ENCODE measurements at regions of chr16 and their contacts with region 1.

Region 1: GRCh38 chr16:57475711-57476339 is 10.5 kb downstream of the DOK4 start:
- DNase-seq: peak; percentile 43 to 79 (median 65)
- ATAC-seq: peak; percentile 90 to 93 (median 92)
- H3K4me3 ChIP-seq: peak overlapping the region in 1 of 2 donors; percentile 2
- H3K4me3 Mint-ChIP-seq: peak overlapping the region in 1 of 3 donors; percentile 34
- H3K27ac ChIP-seq: peak overlapping the region; percentile 34
- H3K27ac Mint-ChIP-seq: peak overlapping the region in 1 of 2 donors; percentile 72
- H3K4me1 ChIP-seq: peaks cover 6 to 26% of the 10 kb centered on the region in 2 experiments
- H3K4me1 Mint-ChIP-seq: peaks cover 13 to 19% (median 17%) of the 10 kb centered on the region in 3 donors
- H3K27me3 ChIP-seq: no peaks in the 10 kb centered on the region
- H3K27me3 Mint-ChIP-seq: no peaks in the 10 kb centered on the region

Region 2: DNA sequence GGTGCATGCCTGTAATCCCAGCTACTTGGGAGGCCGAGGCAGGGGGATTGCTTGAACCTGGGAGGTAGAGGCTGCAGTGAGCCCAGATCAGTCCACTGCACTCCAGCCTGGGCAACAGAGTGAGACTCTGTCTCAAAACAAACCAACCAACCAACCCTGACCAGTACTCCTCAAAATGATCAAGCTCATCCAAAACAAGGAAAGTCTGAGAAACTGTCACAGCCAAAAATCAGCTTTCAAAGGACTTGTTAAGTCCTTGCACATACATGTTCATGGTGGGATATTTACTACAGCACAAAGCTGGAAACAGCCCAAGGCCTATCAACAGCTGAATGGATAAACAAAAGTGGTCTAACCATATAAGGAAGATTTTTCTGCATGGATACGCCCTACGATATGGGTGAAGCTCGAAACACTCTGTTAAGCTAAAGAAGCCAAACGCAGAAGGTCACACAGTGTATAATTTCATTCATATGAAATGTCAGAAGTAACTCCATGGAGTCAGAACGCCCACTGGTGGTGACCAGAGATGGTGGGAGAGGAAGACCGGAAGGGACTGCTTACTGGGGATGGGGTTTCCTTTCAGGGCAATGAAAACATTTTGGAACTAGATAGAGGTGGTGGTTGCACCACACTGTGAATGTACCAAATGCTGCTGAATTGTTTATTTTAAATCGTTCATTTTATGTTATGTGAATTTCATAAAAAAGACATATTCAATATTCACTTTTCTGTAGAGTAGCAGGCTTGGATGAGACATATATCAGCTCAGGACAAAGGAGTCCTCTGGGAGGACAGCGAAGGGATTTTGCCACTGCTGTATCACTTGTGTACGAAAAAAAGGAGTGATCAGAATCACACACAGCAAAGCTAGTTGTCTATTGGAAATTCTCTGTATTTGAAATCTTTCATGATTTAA is 53.5 kb before region 1 on chr16:
- CTCF ChIA-PET with region 1: interaction called in 1 of 2 experiments, 3 read pairs
- POLR2A ChIA-PET with region 1: interaction called in 1 of 2 experiments, 11 read pairs
- DNase-seq: no peak
- ATAC-seq: no peak
- H3K4me3 ChIP-seq: no peak overlapping the region
- H3K4me3 Mint-ChIP-seq: no peak overlapping the region
- H3K27ac ChIP-seq: no peak overlapping the region
- H3K27ac Mint-ChIP-seq: no peak overlapping the region
- H3K4me1 ChIP-seq: peaks cover 0 to 16% of the 10 kb centered on the region in 2 experiments
- H3K4me1 Mint-ChIP-seq: peaks cover 15 to 17% (median 16%) of the 10 kb centered on the region in 3 donors
- H3K27me3 ChIP-seq: peaks cover 0 to 2% of the 10 kb centered on the region in 2 experiments
- H3K27me3 Mint-ChIP-seq: no peaks in the 10 kb centered on the region

Region 3: DNA sequence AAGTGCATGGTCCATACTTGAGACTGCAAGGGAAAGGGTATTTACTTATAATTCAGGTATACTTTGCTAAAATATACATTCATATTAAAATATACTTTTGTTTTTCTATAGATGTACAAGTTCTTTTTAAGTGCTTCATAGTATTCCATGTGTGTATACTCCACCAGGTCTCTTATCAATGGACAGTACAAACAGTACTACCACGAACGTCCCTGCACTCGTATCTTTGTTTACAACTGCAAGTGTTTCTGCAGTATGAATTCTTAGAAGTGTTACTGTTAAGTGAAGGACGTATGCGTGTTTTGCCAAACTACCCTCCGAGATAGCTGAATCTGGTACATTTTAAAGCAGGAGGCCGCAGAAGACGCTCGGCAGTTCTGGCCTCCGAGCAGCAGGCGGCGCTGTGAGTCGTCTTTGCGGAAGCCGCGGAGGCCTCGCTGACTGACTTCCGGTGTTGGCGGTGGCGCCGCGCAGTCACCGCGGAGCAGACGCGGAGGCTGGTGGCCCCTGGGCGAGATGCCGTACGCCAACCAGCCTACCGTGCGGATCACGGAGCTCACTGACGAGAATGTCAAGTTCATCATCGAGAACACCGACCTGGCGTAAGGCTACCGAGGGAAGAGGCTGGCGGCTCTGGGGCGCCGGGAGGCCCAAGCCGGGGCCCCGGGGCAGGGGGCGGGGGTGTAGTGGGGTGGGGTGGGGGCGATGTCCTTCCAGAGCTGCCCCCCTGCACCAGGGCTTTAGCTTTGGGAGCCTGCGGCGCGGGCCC is 13.4 kb before region 1 on chr16 and contains the start of gene POLR2C:
- CTCF ChIA-PET with region 1: interaction called in 1 of 2 experiments, 13 read pairs
- POLR2A ChIA-PET with region 1: no interaction called
- DNase-seq: peak; percentile 82 to 96 (median 89)
- ATAC-seq: peak; percentile 95 to 98 (median 96)
- H3K4me3 ChIP-seq: peak within 1 kb of the TSS; percentile 72 to 93
- H3K4me3 Mint-ChIP-seq: peak within 1 kb of the TSS; percentile 90 to 100 (median 100)
- H3K27ac ChIP-seq: peak within 1 kb of the TSS; percentile 22
- H3K27ac Mint-ChIP-seq: peak within 1 kb of the TSS; percentile 100
- H3K4me1 ChIP-seq: peaks cover 6 to 19% of the 10 kb centered on the region in 2 experiments
- H3K4me1 Mint-ChIP-seq: peaks cover 35 to 42% (median 38%) of the 10 kb centered on the region in 3 donors
- H3K27me3 ChIP-seq: no peaks in the 10 kb centered on the region
- H3K27me3 Mint-ChIP-seq: no peaks in the 10 kb centered on the region
- total RNA-seq, gene POLR2C: 63.8 to 93.9 (median 69.0) TPM

Region 4: GRCh38 chr16:57500578-57501111 is 24.8 kb after region 1 on chr16:
- CTCF ChIA-PET with region 1: no interaction called
- POLR2A ChIA-PET with region 1: no interaction called
- DNase-seq: no peak
- ATAC-seq: peak; percentile 31 to 45 (median 34)
- H3K4me3 ChIP-seq: no peak overlapping the region
- H3K4me3 Mint-ChIP-seq: no peak overlapping the region
- H3K27ac ChIP-seq: no peak overlapping the region
- H3K27ac Mint-ChIP-seq: no peak overlapping the region
- H3K4me1 ChIP-seq: peaks cover 3 to 19% of the 10 kb centered on the region in 2 experiments
- H3K4me1 Mint-ChIP-seq: peaks cover 8 to 10% (median 10%) of the 10 kb centered on the region in 3 donors
- H3K27me3 ChIP-seq: peaks cover 0 to 17% of the 10 kb centered on the region in 2 experiments
- H3K27me3 Mint-ChIP-seq: peaks cover 0 to 3% of the 10 kb centered on the region in 2 donors

Measured in T-cell (primary cell).